ENCODE measurements at regions of chr6 and their contacts with region 1.

Region 1: DNA sequence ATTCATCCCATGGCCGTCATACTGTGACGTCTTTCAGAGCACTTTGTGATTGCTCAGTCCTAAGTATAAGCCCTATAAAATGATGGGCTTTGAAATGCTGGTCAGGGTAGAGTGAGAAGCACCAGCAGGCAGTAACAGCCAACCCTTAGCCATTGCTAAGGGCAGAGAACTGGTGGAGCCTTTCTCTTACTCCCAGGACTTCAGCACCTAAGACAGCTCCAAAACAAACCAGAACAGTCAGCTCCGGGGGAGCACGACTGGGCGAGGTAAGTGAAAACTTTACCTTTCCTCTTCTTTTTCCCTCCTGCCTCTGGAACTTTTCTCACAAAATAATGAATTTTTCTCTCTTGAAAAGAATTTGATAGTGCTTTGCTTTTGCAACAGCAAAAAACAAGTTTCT is at the start of gene VIP:
- DNase-seq: peak; percentile 46
- H3K4me3 ChIP-seq: no peak within 1 kb of the TSS
- H3K27ac ChIP-seq: no peak within 1 kb of the TSS
- H3K4me1 ChIP-seq: no peaks in the 10 kb centered on the region
- H3K27me3 ChIP-seq: peaks cover 0 to 2% of the 10 kb centered on the region in 2 experiments
- CTCF ChIP-seq: no peak
- POLR2A ChIP-seq: no peak
- total RNA-seq, gene VIP: 1.2 and 2.0 TPM in 2 replicates

Region 2: DNA sequence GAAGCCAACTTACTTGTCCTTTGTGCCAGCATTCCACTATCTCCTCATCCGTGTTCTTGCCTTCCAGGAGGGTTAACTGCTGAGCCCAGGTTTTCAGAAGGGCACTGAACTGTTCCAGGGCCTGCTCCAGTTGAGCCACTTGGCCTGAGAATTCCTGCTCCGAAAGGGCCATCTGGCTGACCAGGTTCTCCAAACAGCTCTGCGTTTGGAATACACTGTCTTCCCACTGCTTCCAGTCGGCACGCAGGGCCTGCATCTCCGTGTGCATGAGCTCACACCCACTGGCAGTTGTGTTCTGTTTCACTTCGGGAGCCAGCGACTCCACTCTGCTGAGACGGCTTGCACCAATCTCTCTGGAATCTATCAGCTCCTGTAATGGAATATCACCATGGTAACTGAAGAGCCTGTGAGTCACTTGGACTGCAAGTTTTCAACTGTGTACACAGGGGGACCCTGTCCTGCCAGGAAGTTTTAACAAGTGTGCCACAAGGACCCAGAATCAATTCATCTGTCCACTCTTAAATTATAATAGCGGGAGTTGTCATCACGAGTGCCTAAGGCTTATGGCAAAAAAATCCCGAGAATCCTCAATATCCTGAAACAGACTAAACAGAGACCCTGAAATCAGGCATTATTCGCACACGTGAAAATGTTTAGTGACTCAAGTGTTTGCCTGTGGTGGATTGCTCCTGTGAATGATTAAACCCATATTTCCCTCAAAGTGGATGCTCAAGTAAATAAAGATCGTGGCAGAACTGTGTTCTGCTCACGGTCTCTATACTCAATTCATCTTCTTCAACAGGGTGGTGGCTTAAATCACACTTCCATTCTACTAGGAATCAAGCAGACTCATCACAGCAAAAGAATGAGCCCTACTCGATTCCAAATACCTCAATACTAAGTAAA is 369.4 kb before region 1 on chr6:
- CTCF ChIA-PET with region 1: no interaction called
- POLR2A ChIA-PET with region 1: no interaction called
- dilution Hi-C with region 1: no loop called
- intact Hi-C with region 1: no loop called
- DNase-seq: peak; percentile 95
- H3K4me3 ChIP-seq: peak overlapping the region; percentile 50 to 84 (median 53)
- H3K27ac ChIP-seq: peak overlapping the region; percentile 96
- H3K4me1 ChIP-seq: peaks cover 23% of the 10 kb centered on the region
- H3K27me3 ChIP-seq: no peaks in the 10 kb centered on the region
- CTCF ChIP-seq: no peak
- POLR2A ChIP-seq: no peak

Region 3: GRCh38 chr6:152863618-152864326 is 113.1 kb after region 1 on chr6:
- CTCF ChIA-PET with region 1: interaction called, 3 read pairs
- POLR2A ChIA-PET with region 1: no interaction called
- dilution Hi-C with region 1: no loop called
- intact Hi-C with region 1: loop called (anchors 2 kb)
- DNase-seq: peak; percentile 78
- H3K4me3 ChIP-seq: no peak overlapping the region
- H3K27ac ChIP-seq: no peak overlapping the region
- H3K4me1 ChIP-seq: no peaks in the 10 kb centered on the region
- H3K27me3 ChIP-seq: no peaks in the 10 kb centered on the region
- CTCF ChIP-seq: peak; percentile 48 to 54
- POLR2A ChIP-seq: no peak

Region 4: GRCh38 chr6:152897799-152898399 is 147.2 kb after region 1 on chr6:
- CTCF ChIA-PET with region 1: interaction called, 13 read pairs
- POLR2A ChIA-PET with region 1: no interaction called
- dilution Hi-C with region 1: no loop called
- intact Hi-C with region 1: loop called (anchors 5 kb)
- DNase-seq: peak; percentile 65
- H3K4me3 ChIP-seq: no peak overlapping the region
- H3K27ac ChIP-seq: no peak overlapping the region
- H3K4me1 ChIP-seq: no peaks in the 10 kb centered on the region
- H3K27me3 ChIP-seq: peaks cover 0 to 2% of the 10 kb centered on the region in 2 experiments
- CTCF ChIP-seq: peak; percentile 84 to 88
- POLR2A ChIP-seq: no peak

Region 5: DNA sequence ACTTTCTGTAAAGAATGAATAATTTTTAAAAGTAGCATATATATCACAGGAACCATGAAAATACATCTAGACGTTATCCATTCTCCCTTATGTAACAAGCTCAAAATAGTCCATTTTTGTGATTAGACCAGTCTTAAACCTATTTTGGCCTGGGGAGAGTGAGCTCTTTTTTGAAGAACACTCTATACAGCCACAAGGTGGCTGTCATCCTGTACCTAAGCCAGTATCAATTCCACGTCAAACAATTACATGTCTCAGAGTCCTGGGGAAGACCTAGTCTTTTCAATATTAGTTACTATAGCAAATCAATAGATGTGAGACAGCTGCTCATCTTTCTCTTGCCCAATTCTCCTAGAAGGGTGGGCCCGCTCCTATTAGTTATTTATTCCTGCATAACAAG is 203.7 kb after region 1 on chr6:
- CTCF ChIA-PET with region 1: interaction called, 20 read pairs
- POLR2A ChIA-PET with region 1: no interaction called
- dilution Hi-C with region 1: no loop called
- intact Hi-C with region 1: loop called (anchors 1 kb)
- DNase-seq: no peak
- H3K4me3 ChIP-seq: no peak overlapping the region
- H3K27ac ChIP-seq: no peak overlapping the region
- H3K4me1 ChIP-seq: peaks cover 11% of the 10 kb centered on the region
- H3K27me3 ChIP-seq: no peaks in the 10 kb centered on the region
- CTCF ChIP-seq: peak in 1 of 2 donors; percentile 12
- POLR2A ChIP-seq: no peak

Region 6: GRCh38 chr6:153591159-153591558 is 840.5 kb after region 1 on chr6:
- CTCF ChIA-PET with region 1: no interaction called
- POLR2A ChIA-PET with region 1: no interaction called
- dilution Hi-C with region 1: no loop called
- intact Hi-C with region 1: no loop called
- DNase-seq: no peak
- H3K4me3 ChIP-seq: no peak overlapping the region
- H3K27ac ChIP-seq: no peak overlapping the region
- H3K4me1 ChIP-seq: no peaks in the 10 kb centered on the region
- H3K27me3 ChIP-seq: no peaks in the 10 kb centered on the region
- CTCF ChIP-seq: no peak
- POLR2A ChIP-seq: no peak